ENCODE measurements at regions of chr1 and their contacts with region 1.

Region 1: DNA sequence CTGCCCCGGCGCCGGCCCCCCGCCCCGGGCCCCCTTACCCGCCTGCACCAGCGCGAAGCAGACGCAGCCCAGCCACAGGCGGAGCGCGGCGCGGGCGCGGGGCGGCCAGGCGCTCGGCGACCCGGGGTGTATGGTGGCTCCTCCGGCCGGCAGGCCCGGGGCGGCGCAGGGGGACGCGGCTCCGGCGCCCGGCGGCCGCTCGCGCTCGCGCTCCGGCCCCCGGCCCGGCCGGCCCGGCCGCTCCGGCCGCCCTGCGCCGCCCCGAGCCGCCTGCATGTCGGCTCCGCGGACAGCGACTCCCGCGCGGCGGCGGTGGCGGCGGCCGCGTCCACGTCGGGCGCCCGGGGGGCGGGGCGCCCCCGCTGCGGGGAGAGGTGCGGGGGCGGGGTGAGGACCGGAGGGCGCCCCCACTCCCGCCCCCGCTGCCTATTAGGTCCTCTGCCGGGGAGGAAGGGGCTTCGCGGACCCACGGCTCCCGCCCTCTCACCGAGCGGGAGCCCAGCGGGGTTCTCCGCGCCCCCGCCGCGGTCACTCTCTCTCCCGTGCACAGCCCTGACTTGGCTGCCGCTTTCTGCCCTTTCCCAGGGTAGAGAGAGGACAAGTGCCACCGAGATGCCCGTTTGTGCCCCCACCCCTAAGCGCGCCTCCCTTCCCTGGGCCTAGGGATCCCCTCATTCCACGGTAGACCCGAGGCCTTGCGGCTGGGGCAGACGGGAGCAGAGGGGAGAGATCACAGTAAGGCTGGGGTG is at the start of gene FNDC5:
- DNase-seq: no peak
- ATAC-seq: peak; percentile 54
- H3K4me3 Mint-ChIP-seq: no peak within 1 kb of the TSS
- H3K27ac Mint-ChIP-seq: no peak within 1 kb of the TSS
- H3K4me1 Mint-ChIP-seq: peaks cover 10% of the 10 kb centered on the region
- H3K27me3 Mint-ChIP-seq: peaks cover 42% of the 10 kb centered on the region
- total RNA-seq, gene FNDC5: not detected

Region 2: GRCh38 chr1:32828341-32828740 is 42.4 kb before region 1 on chr1:
- CTCF ChIA-PET with region 1: interaction called, 10 read pairs
- POLR2A ChIA-PET with region 1: no interaction called
- DNase-seq: no peak
- ATAC-seq: no peak
- H3K4me3 Mint-ChIP-seq: no peak overlapping the region
- H3K27ac Mint-ChIP-seq: no peak overlapping the region
- H3K4me1 Mint-ChIP-seq: peaks cover 15% of the 10 kb centered on the region
- H3K27me3 Mint-ChIP-seq: no peaks in the 10 kb centered on the region

Region 3: DNA sequence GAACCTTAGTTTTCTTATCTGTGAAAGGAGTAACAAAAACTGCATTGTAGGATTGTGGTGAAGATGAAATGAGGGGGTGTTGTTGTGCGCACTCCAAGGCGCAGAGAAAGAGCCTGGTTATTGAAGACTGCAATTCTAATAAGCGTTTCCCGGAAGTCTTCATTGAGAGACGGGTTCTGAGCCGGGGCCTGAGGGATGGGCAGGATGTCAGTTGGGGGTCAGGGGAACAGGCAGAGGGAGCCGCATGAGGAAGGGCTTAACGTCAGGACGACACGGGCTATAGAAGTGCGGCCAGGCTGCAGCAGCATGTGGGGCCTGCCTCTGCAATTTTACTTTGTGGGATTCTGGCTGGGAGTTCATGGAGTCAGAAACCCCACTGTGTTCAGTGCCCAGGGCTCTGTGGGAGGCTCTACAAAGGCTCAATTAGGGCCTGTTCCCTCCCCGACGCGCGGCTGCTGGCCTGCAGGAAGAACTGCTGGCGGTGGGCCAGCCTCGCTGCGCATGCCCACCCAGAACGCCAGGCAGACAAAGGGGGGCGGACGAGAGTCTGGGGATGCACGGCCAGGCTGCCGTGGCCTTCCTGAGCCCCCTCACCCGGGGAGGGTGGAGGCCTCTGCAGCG is 290.4 kb after region 1 on chr1:
- CTCF ChIA-PET with region 1: no interaction called
- POLR2A ChIA-PET with region 1: no interaction called
- DNase-seq: no peak
- ATAC-seq: no peak
- H3K4me3 Mint-ChIP-seq: no peak overlapping the region
- H3K27ac Mint-ChIP-seq: no peak overlapping the region
- H3K4me1 Mint-ChIP-seq: no peaks in the 10 kb centered on the region
- H3K27me3 Mint-ChIP-seq: no peaks in the 10 kb centered on the region